PC-3 (cell line): ENCODE measurements at regions of chr1 and their contacts with region 1.

Region 1: GRCh38 chr1:74197657-74198552 is at the starts of genes FPGT and LRRIQ3:
- DNase-seq: peak; percentile 93
- ATAC-seq: peak; percentile 95
- H3K4me3 ChIP-seq: peak within 1 kb of the TSS; percentile 80
- H3K27ac ChIP-seq: peak within 1 kb of the TSS; percentile 7
- H3K4me1 ChIP-seq: peaks cover 12% of the 10 kb centered on the region; the same call in 1 of the 2 replicates
- H3K27me3 ChIP-seq: no peaks in the 10 kb centered on the region
- CTCF ChIP-seq: no peak
- total RNA-seq, gene FPGT: 4.6 and 7.3 TPM in 2 replicates
- total RNA-seq, gene LRRIQ3: 0.23 and 0.95 TPM in 2 replicates

Region 2: GRCh38 chr1:74222709-74223108 is 24.8 kb after region 1 on chr1:
- CTCF ChIA-PET with region 1: no interaction called
- POLR2A ChIA-PET with region 1: no interaction called
- intact Hi-C with region 1: loop called (anchors 1 kb)
- DNase-seq: peak; percentile 77
- ATAC-seq: peak; percentile 100
- H3K4me3 ChIP-seq: no peak overlapping the region
- H3K27ac ChIP-seq: no peak overlapping the region
- H3K4me1 ChIP-seq: peaks cover 14% of the 10 kb centered on the region
- H3K27me3 ChIP-seq: peaks cover 16% of the 10 kb centered on the region; the same call in 1 of the 2 replicates
- CTCF ChIP-seq: no peak

Region 3: GRCh38 chr1:74468982-74469603 is 271.2 kb after region 1 on chr1:
- CTCF ChIA-PET with region 1: no interaction called
- POLR2A ChIA-PET with region 1: no interaction called
- intact Hi-C with region 1: loop called (anchors 1 kb)
- DNase-seq: peak; percentile 76
- ATAC-seq: 0 out of 2 replicates have a peak, but pooled peaks have one; percentile 45
- H3K4me3 ChIP-seq: no peak overlapping the region
- H3K27ac ChIP-seq: no peak overlapping the region
- H3K4me1 ChIP-seq: peaks cover 5% of the 10 kb centered on the region; the same call in 1 of the 2 replicates
- H3K27me3 ChIP-seq: peaks cover 37% of the 10 kb centered on the region
- CTCF ChIP-seq: peak; percentile 82

Region 4: GRCh38 chr1:74733604-74734484 is 535.9 kb after region 1 on chr1:
- CTCF ChIA-PET with region 1: no interaction called
- POLR2A ChIA-PET with region 1: no interaction called
- intact Hi-C with region 1: loop called (anchors 2 kb)
- DNase-seq: peak; percentile 81
- ATAC-seq: peak; percentile 30
- H3K4me3 ChIP-seq: peak overlapping the region; percentile 81
- H3K27ac ChIP-seq: peak overlapping the region; percentile 81
- H3K4me1 ChIP-seq: peaks cover 34% of the 10 kb centered on the region
- H3K27me3 ChIP-seq: no peaks in the 10 kb centered on the region
- CTCF ChIP-seq: peak; percentile 84